ENCODE measurements at regions of chr7 and their contacts with region 1.

Region 1: GRCh38 chr7:15720849-15721471 is 34.5 kb upstream of the MEOX2 start:
- DNase-seq: peak; percentile 5
- H3K4me3 ChIP-seq: no peak overlapping the region
- H3K27ac ChIP-seq: no peak overlapping the region
- H3K4me1 ChIP-seq: no peaks in the 10 kb centered on the region
- H3K27me3 ChIP-seq: 0 out of 2 replicates have a peak, but pooled peaks cover 5% of the 10 kb centered on the region
- CTCF ChIP-seq: peak; percentile 99
- EP300 ChIP-seq: no peak
- RAD21 ChIP-seq: peak; percentile 83

Region 2: GRCh38 chr7:15015545-15016326 is 705.2 kb before region 1 on chr7:
- CTCF ChIA-PET with region 1: interaction called, 10 read pairs
- POLR2A ChIA-PET with region 1: no interaction called
- DNase-seq: peak; percentile 49
- H3K4me3 ChIP-seq: peak overlapping the region; percentile 37 to 45
- H3K27ac ChIP-seq: peak overlapping the region; percentile 45 to 80; a peak in 3 of 4 replicates
- H3K4me1 ChIP-seq: peaks cover 7 to 14% of the 10 kb centered on the region in 2 experiments
- H3K27me3 ChIP-seq: no peaks in the 10 kb centered on the region
- CTCF ChIP-seq: peak; percentile 96
- EP300 ChIP-seq: peak in 1 of 2 experiments; percentile 5; a peak in 1 of 4 replicates
- RAD21 ChIP-seq: peak; percentile 97

Region 3: GRCh38 chr7:15305002-15305600 is 415.9 kb before region 1 on chr7:
- CTCF ChIA-PET with region 1: interaction called, 25 read pairs
- POLR2A ChIA-PET with region 1: no interaction called
- DNase-seq: peak; percentile 36
- H3K4me3 ChIP-seq: no peak overlapping the region; a peak in 1 of 4 replicates
- H3K27ac ChIP-seq: no peak overlapping the region
- H3K4me1 ChIP-seq: no peaks in the 10 kb centered on the region
- H3K27me3 ChIP-seq: no peaks in the 10 kb centered on the region
- CTCF ChIP-seq: peak; percentile 96
- EP300 ChIP-seq: no peak
- RAD21 ChIP-seq: peak; percentile 78

Region 4: GRCh38 chr7:15334536-15335263 is 386.3 kb before region 1 on chr7:
- CTCF ChIA-PET with region 1: interaction called, 10 read pairs
- POLR2A ChIA-PET with region 1: no interaction called
- DNase-seq: no peak
- H3K4me3 ChIP-seq: no peak overlapping the region
- H3K27ac ChIP-seq: no peak overlapping the region
- H3K4me1 ChIP-seq: no peaks in the 10 kb centered on the region
- H3K27me3 ChIP-seq: no peaks in the 10 kb centered on the region
- CTCF ChIP-seq: no peak
- EP300 ChIP-seq: no peak
- RAD21 ChIP-seq: no peak

Region 5: GRCh38 chr7:15557186-15557585 is 163.8 kb before region 1 on chr7:
- CTCF ChIA-PET with region 1: no interaction called
- POLR2A ChIA-PET with region 1: no interaction called
- DNase-seq: no peak
- H3K4me3 ChIP-seq: no peak overlapping the region
- H3K27ac ChIP-seq: no peak overlapping the region
- H3K4me1 ChIP-seq: peaks cover 5 to 10% of the 10 kb centered on the region in 2 experiments; a peak in 3 of 4 replicates
- H3K27me3 ChIP-seq: no peaks in the 10 kb centered on the region; the same call in 1 of the 2 replicates
- CTCF ChIP-seq: no peak
- EP300 ChIP-seq: no peak
- RAD21 ChIP-seq: no peak

Region 6: DNA sequence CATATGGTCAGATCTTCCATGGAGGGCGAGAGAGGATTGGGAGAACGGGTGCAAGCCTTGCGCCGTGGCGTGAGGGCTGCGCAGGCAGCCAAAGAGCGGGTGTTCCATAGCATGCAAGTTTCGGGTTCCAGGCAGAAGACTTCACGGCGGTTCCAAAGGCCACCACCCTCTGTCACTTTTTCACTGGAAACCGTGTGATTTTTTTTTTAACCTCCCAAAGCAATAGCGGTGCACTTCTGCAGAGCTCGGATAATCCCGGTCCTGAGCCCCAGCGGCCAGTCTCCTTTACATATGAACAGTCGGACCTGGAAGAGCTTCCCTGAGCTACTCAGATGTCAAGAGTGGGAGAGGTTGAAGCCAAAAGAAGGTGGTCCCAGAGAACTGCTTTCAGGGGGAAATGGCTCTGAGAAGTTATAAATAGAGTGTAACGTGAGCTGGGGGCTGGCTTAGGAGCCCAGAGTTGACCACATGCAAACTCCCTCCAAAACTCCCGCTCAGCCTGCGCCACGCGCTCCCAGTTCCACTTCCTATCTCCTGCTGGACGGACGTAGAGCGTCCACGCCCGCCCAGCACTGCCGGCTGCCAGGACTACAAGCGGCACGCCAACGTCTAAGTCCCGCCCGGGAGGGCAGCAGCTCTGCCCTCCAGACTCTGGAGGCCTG is 34.5 kb before region 1 on chr7 and contains the start of gene MEOX2:
- CTCF ChIA-PET with region 1: interaction called, 32 read pairs
- POLR2A ChIA-PET with region 1: no interaction called
- DNase-seq: peak; percentile 26
- H3K4me3 ChIP-seq: no peak within 1 kb of the TSS
- H3K27ac ChIP-seq: no peak within 1 kb of the TSS
- H3K4me1 ChIP-seq: no peaks in the 10 kb centered on the region; a peak in 1 of 4 replicates
- H3K27me3 ChIP-seq: peaks cover 48% of the 10 kb centered on the region
- CTCF ChIP-seq: no peak
- EP300 ChIP-seq: no peak
- RAD21 ChIP-seq: no peak
- polyA plus RNA-seq, gene MEOX2: not detected in 2 replicates

Region 7: DNA sequence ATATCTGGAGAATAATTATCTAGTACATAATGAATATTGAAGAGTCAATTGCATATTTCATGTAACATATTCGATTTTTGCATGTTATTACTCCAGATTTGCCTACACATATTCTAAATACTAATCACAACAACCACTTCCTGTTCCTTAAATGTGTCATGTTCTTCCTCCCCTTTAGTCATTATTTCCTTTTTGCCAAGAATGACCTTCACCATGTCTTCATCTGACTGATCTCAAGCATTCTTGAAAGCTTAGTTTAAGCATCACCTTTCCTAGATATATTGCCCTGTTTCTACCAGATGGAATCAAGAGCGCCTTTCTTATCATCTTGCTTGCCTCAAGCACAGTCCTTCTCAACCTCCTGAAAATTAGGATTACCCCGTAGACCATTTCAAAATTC is 11.0 kb before region 1 on chr7:
- CTCF ChIA-PET with region 1: interaction called, 14 read pairs
- POLR2A ChIA-PET with region 1: no interaction called
- DNase-seq: no peak
- H3K4me3 ChIP-seq: no peak overlapping the region
- H3K27ac ChIP-seq: no peak overlapping the region
- H3K4me1 ChIP-seq: no peaks in the 10 kb centered on the region
- H3K27me3 ChIP-seq: peaks cover 4% of the 10 kb centered on the region; the same call in 1 of the 2 replicates
- CTCF ChIP-seq: no peak
- EP300 ChIP-seq: no peak
- RAD21 ChIP-seq: no peak

Region 8: GRCh38 chr7:15747301-15747700 is 26.3 kb after region 1 on chr7:
- CTCF ChIA-PET with region 1: interaction called, 13 read pairs
- POLR2A ChIA-PET with region 1: no interaction called
- DNase-seq: no peak
- H3K4me3 ChIP-seq: no peak overlapping the region
- H3K27ac ChIP-seq: no peak overlapping the region
- H3K4me1 ChIP-seq: no peaks in the 10 kb centered on the region
- H3K27me3 ChIP-seq: no peaks in the 10 kb centered on the region
- CTCF ChIP-seq: no peak
- EP300 ChIP-seq: no peak
- RAD21 ChIP-seq: no peak

Region 9: DNA sequence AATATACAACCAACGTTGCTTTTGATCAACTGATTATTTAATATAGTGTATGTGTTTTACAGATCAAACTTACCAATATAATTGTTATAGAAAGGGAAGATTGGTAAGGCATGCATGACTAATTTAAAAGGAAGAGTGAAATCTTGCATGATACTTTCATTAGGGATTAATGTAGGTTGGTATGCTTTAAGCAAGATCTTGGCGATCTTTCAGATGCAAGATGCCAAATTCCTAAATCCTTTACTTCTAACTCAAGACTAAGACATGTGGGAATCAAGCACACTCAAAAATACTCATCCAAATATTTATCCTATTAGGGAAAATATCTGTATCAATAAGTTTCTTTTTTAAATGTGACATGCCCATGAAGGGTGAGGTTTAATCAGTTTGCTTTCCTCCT is 287.0 kb after region 1 on chr7:
- CTCF ChIA-PET with region 1: no interaction called
- POLR2A ChIA-PET with region 1: no interaction called
- DNase-seq: no peak
- H3K4me3 ChIP-seq: no peak overlapping the region
- H3K27ac ChIP-seq: no peak overlapping the region
- H3K4me1 ChIP-seq: no peaks in the 10 kb centered on the region
- H3K27me3 ChIP-seq: no peaks in the 10 kb centered on the region; the same call in 1 of the 2 replicates
- CTCF ChIP-seq: no peak
- EP300 ChIP-seq: no peak
- RAD21 ChIP-seq: no peak

Region 10: DNA sequence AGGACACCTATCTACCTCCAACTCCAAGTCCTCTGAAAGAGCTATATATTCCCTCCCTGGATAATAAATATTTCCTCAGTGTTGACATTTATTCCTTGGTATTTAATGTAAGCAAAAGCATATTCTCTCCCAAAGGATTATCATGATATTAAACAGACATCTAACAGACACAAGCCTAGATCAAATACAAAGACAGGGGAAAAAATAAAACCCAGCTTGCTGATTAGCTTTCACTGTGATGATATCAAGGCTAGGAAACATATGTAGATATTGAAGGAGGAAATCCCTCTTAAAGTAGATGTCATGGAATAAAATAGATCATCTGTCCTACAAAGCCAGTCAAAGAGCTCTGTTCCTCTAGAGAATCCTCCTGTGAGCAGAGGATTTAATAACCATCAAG is 605.1 kb after region 1 on chr7:
- CTCF ChIA-PET with region 1: no interaction called
- POLR2A ChIA-PET with region 1: no interaction called
- DNase-seq: peak; percentile 30
- H3K4me3 ChIP-seq: no peak overlapping the region
- H3K27ac ChIP-seq: peak overlapping the region in 1 of 2 experiments; percentile 51; a peak in 2 of 4 replicates
- H3K4me1 ChIP-seq: no peaks in the 10 kb centered on the region; a peak in 1 of 4 replicates
- H3K27me3 ChIP-seq: no peaks in the 10 kb centered on the region
- CTCF ChIP-seq: no peak
- EP300 ChIP-seq: peak in 1 of 2 experiments; percentile 73; a peak in 2 of 4 replicates
- RAD21 ChIP-seq: no peak